Endothelial cell of umbilical vein (primary cell): ENCODE measurements at regions of chr16 and their contacts with region 1.

Region 1: GRCh38 chr16:69396187-69397061 is 10.6 kb upstream of the TERF2 start:
- DNase-seq: peak; percentile 85
- H3K4me3 ChIP-seq: no peak overlapping the region
- H3K27ac ChIP-seq: peak overlapping the region; percentile 56
- H3K4me1 ChIP-seq: peaks cover 36% of the 10 kb centered on the region
- H3K27me3 ChIP-seq: peaks cover 0 to 1% of the 10 kb centered on the region in 2 experiments
- CTCF ChIP-seq: peak; percentile 39 to 54
- POLR2A ChIP-seq: no peak

Region 2: GRCh38 chr16:69363281-69363717 is 33.1 kb before region 1 on chr16:
- CTCF ChIA-PET with region 1: no interaction called
- POLR2A ChIA-PET with region 1: no interaction called
- dilution Hi-C with region 1: no loop called
- intact Hi-C with region 1: no loop called
- DNase-seq: no peak
- H3K4me3 ChIP-seq: no peak overlapping the region
- H3K27ac ChIP-seq: no peak overlapping the region
- H3K4me1 ChIP-seq: peaks cover 7% of the 10 kb centered on the region
- H3K27me3 ChIP-seq: no peaks in the 10 kb centered on the region
- CTCF ChIP-seq: no peak
- POLR2A ChIP-seq: no peak

Region 3: DNA sequence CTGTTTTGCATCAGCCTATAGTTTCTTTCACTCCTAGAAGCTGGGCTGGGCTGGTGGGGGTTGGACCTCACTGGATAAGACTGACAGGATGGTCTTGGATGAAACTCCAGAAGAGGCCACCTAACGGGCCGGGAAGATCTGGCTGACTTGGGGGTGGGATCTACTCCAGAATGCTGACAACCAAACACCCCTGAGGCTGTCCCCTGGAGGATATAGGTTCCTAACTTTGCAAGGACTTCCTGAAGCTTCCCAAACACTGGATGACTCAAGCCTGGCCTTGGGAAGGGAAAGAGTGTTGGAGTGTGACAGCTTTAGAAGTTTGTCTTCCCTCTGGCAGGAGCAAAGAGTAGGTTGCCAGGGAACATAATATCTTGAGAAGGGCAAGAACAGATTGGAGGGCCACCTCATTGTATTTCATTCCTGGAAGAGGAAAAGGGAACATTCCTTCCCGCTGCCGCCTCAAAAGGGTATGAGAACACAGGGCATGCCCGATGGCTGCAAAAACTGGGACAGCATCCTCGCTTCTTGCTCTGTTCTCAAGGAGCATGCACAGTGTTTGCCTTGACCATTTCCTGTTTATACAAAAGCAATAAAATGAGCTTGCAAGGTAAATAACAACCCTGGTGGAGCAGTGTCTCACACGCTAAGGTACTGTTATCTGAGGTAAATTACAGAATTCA is 21.2 kb after region 1 on chr16:
- CTCF ChIA-PET with region 1: interaction called, 21 read pairs
- POLR2A ChIA-PET with region 1: no interaction called
- dilution Hi-C with region 1: no loop called
- intact Hi-C with region 1: no loop called
- DNase-seq: peak; percentile 64
- H3K4me3 ChIP-seq: no peak overlapping the region
- H3K27ac ChIP-seq: peak overlapping the region; percentile 39
- H3K4me1 ChIP-seq: peaks cover 12% of the 10 kb centered on the region
- H3K27me3 ChIP-seq: no peaks in the 10 kb centered on the region
- CTCF ChIP-seq: no peak
- POLR2A ChIP-seq: no peak

Region 4: DNA sequence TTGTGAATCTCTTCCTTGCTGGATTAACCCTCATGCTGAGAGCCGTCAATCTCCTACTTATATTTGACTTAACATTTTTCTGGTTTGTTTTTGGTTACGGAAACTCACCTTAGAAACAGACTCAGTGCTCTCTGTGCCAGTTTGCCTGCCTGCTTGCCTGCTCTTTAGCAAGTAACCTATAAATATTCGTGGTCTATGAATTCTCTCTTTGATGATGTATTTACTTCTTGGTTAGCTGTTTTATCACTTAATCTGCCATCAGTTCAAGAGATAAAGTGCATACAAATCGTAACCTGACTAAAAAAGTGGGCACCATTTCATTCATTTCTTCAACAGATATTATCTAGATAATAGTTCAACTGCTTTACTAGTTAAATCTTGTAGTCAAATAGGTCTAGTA is 54.7 kb after region 1 on chr16:
- CTCF ChIA-PET with region 1: interaction called, 49 read pairs
- POLR2A ChIA-PET with region 1: no interaction called
- dilution Hi-C with region 1: no loop called
- intact Hi-C with region 1: no loop called
- DNase-seq: no peak
- H3K4me3 ChIP-seq: no peak overlapping the region
- H3K27ac ChIP-seq: no peak overlapping the region
- H3K4me1 ChIP-seq: no peaks in the 10 kb centered on the region
- H3K27me3 ChIP-seq: no peaks in the 10 kb centered on the region
- CTCF ChIP-seq: no peak
- POLR2A ChIP-seq: no peak

Region 5: GRCh38 chr16:69482410-69482991 is 86.1 kb after region 1 on chr16:
- CTCF ChIA-PET with region 1: interaction called, 38 read pairs
- POLR2A ChIA-PET with region 1: interaction called, 3 read pairs
- dilution Hi-C with region 1: no loop called
- intact Hi-C with region 1: loop called (anchors 1 kb)
- DNase-seq: peak; percentile 97
- H3K4me3 ChIP-seq: no peak overlapping the region
- H3K27ac ChIP-seq: peak overlapping the region; percentile 78
- H3K4me1 ChIP-seq: peaks cover 25% of the 10 kb centered on the region
- H3K27me3 ChIP-seq: no peaks in the 10 kb centered on the region
- CTCF ChIP-seq: no peak
- POLR2A ChIP-seq: no peak

Region 6: DNA sequence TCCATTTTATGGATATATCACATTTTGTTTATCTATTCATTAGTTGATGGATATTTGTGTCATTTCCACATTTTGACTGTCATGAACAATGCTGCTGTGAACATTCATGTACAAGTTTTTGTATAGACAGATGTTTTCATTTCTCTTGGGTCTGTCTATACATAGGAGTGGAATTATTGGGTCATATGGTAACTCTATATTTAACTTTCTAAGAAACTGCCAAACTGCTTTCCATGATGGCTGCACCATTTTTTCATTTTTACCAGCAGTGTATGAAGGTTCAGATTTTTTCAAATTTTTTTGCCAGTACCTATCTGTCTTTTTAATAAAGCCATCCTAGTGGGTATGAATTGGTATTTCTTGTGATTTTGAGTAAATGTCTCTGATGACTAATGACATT is 184.9 kb after region 1 on chr16:
- CTCF ChIA-PET with region 1: interaction called, 17 read pairs
- POLR2A ChIA-PET with region 1: no interaction called
- dilution Hi-C with region 1: no loop called
- intact Hi-C with region 1: no loop called
- DNase-seq: no peak
- H3K4me3 ChIP-seq: no peak overlapping the region
- H3K27ac ChIP-seq: no peak overlapping the region
- H3K4me1 ChIP-seq: no peaks in the 10 kb centered on the region
- H3K27me3 ChIP-seq: no peaks in the 10 kb centered on the region
- CTCF ChIP-seq: no peak
- POLR2A ChIP-seq: no peak

Region 7: GRCh38 chr16:69669577-69669976 is 273.2 kb after region 1 on chr16:
- CTCF ChIA-PET with region 1: interaction called, 16 read pairs
- POLR2A ChIA-PET with region 1: no interaction called
- dilution Hi-C with region 1: no loop called
- intact Hi-C with region 1: loop called (anchors 10 kb)
- DNase-seq: no peak
- H3K4me3 ChIP-seq: no peak overlapping the region
- H3K27ac ChIP-seq: no peak overlapping the region
- H3K4me1 ChIP-seq: no peaks in the 10 kb centered on the region
- H3K27me3 ChIP-seq: no peaks in the 10 kb centered on the region
- CTCF ChIP-seq: no peak
- POLR2A ChIP-seq: no peak

Region 8: DNA sequence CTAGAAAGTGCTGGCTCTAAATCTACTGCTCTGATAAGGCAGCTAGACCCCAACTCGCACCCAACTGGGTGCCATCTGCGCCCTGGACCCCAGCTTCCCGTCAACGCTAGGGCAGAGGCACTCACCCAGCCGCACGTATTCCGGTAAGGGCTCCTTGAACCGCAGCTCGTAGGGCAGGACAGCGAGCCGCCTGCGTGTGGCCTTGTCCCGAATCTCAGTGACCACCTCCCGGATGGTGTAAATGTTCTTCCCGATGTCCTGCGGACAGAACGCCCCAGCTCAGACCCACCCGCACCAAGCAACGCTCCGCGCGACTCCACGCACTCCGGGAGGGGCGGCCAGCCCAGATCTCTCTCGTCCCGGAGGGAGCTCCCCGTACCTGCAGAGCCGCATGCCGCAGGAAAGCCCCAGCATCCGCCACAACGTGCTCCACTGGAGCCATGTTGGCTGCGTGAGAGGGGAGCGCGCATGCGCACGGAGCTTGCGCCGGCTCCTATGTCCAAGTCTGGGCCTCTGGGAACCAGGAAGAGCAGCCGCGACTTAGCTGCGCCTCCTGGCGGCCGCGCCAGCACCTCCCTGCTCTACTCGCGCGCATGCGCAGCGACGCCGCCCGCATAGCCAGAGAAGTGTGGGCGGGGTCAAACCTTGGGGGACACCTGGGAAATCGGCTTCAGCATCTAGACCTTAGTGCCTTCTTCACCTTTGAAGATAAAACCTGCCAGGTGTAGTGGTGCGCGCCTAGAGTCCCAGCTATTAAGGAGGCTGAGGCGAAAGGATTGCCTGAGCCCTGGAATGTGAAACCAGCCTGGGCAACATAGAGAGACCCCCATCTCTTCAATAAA is 358.3 kb after region 1 on chr16 and contains the start of gene NOB1:
- CTCF ChIA-PET with region 1: interaction called, 32 read pairs
- POLR2A ChIA-PET with region 1: interaction called, 3 read pairs
- dilution Hi-C with region 1: no loop called
- intact Hi-C with region 1: loop called (anchors 1 kb)
- DNase-seq: peak; percentile 98
- H3K4me3 ChIP-seq: peak within 1 kb of the TSS; percentile 39 to 87 (median 82)
- H3K27ac ChIP-seq: peak within 1 kb of the TSS; percentile 11
- H3K4me1 ChIP-seq: peaks cover 8% of the 10 kb centered on the region
- H3K27me3 ChIP-seq: no peaks in the 10 kb centered on the region
- CTCF ChIP-seq: peak; percentile 99 to 100
- POLR2A ChIP-seq: peak; percentile 97
- total RNA-seq, gene NOB1: 58.6 and 65.4 TPM in 2 replicates